ENCODE measurements at regions of chr11 and their contacts with region 1.

Region 1: GRCh38 chr11:60985991-60986915 is 14.8 kb downstream of the CD6 start:
- DNase-seq: peak; percentile 90
- H3K4me3 Mint-ChIP-seq: peak overlapping the region; percentile 80
- H3K27ac Mint-ChIP-seq: peak overlapping the region; percentile 99
- H3K4me1 Mint-ChIP-seq: peaks cover 91% of the 10 kb centered on the region
- H3K27me3 Mint-ChIP-seq: no peaks in the 10 kb centered on the region

Region 2: DNA sequence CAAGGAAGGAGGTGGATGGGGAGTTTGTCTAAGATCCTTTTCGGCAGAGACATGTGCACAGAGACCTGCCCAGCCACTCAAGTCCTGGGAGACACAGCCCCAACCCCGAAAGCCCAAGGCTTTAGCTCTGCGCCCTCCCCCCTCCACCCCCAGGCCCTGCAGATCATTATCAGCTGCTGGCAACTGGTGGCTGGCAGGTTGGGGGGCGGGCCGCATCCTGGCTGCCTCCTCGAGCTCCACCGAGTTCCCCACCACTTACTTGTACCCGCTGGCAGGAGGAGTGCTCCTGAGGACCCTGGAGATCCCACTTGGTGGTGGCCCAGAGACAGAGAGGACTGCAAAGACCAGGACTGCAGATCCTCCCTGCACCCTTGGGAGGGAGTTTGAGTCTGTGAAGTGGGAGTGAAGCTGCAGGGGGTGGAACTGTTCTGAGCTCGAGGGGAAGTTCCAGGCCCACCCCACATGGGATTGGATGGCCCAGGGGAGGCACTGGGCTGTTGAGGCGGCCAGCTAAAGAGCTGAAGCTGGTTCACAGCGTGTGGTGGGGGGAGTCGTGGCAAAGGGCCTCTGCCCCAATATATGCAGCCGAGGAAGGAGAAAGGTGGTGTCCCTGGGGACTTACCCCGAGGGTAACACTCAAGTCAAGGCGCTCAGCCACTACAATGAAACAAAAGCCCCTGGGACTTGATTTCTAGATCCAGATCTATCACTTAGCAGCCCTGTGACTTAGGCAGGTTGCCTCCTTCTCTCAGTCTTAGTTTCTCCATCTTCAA is 164.2 kb before region 1 on chr11:
- CTCF ChIA-PET with region 1: no interaction called
- POLR2A ChIA-PET with region 1: no interaction called
- DNase-seq: no peak
- H3K4me3 Mint-ChIP-seq: no peak overlapping the region
- H3K27ac Mint-ChIP-seq: no peak overlapping the region
- H3K4me1 Mint-ChIP-seq: no peaks in the 10 kb centered on the region
- H3K27me3 Mint-ChIP-seq: peaks cover 6% of the 10 kb centered on the region

Region 3: GRCh38 chr11:60951899-60952741 is 34.1 kb before region 1 on chr11 and contains the start of gene SLC15A3:
- CTCF ChIA-PET with region 1: no interaction called
- POLR2A ChIA-PET with region 1: no interaction called
- DNase-seq: peak; percentile 29
- H3K4me3 Mint-ChIP-seq: peak within 1 kb of the TSS; percentile 44
- H3K27ac Mint-ChIP-seq: peak within 1 kb of the TSS; percentile 2
- H3K4me1 Mint-ChIP-seq: peaks cover 17% of the 10 kb centered on the region
- H3K27me3 Mint-ChIP-seq: peaks cover 40% of the 10 kb centered on the region
- total RNA-seq, gene SLC15A3: 0.28 to 1.0 TPM

Region 4: DNA sequence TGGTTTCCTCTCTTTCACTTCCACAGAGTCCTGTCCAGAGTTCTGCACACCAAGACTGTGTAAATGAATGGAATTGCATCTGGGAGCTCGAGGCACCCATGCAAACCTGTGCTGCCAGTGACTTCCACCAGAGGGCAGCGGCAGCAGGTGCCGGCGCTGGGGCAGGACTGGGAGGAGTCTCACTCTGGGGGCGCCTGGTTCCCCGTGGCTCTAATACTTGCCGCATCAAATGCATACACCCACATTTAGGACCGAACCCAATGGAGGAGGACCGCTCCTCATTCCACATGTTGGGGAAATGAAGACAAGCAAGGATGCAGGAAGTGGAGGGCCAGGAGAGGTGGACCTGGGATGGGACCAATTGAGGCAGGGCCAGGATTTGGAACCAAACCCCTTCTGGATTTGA is 15.9 kb before region 1 on chr11:
- CTCF ChIA-PET with region 1: interaction called, 27 read pairs
- POLR2A ChIA-PET with region 1: no interaction called
- DNase-seq: peak; percentile 85
- H3K4me3 Mint-ChIP-seq: peak overlapping the region; percentile 88
- H3K27ac Mint-ChIP-seq: peak overlapping the region; percentile 50
- H3K4me1 Mint-ChIP-seq: peaks cover 26% of the 10 kb centered on the region
- H3K27me3 Mint-ChIP-seq: peaks cover 12% of the 10 kb centered on the region

Region 5: GRCh38 chr11:61004180-61004611 is 17.9 kb after region 1 on chr11:
- CTCF ChIA-PET with region 1: interaction called, 3 read pairs
- POLR2A ChIA-PET with region 1: interaction called, 53 read pairs
- DNase-seq: peak; percentile 43
- H3K4me3 Mint-ChIP-seq: peak overlapping the region; percentile 53
- H3K27ac Mint-ChIP-seq: peak overlapping the region; percentile 83
- H3K4me1 Mint-ChIP-seq: peaks cover 77% of the 10 kb centered on the region
- H3K27me3 Mint-ChIP-seq: no peaks in the 10 kb centered on the region

Region 6: GRCh38 chr11:61021661-61022212 is 35.5 kb after region 1 on chr11:
- CTCF ChIA-PET with region 1: interaction called, 3 read pairs
- POLR2A ChIA-PET with region 1: interaction called, 10 read pairs
- DNase-seq: peak; percentile 83
- H3K4me3 Mint-ChIP-seq: peak overlapping the region; percentile 59
- H3K27ac Mint-ChIP-seq: peak overlapping the region; percentile 91
- H3K4me1 Mint-ChIP-seq: peaks cover 74% of the 10 kb centered on the region
- H3K27me3 Mint-ChIP-seq: no peaks in the 10 kb centered on the region

Region 7: GRCh38 chr11:61054927-61055562 is 68.8 kb after region 1 on chr11:
- CTCF ChIA-PET with region 1: interaction called, 3 read pairs
- POLR2A ChIA-PET with region 1: interaction called, 12 read pairs
- DNase-seq: peak; percentile 46
- H3K4me3 Mint-ChIP-seq: peak overlapping the region; percentile 6
- H3K27ac Mint-ChIP-seq: peak overlapping the region; percentile 85
- H3K4me1 Mint-ChIP-seq: peaks cover 84% of the 10 kb centered on the region
- H3K27me3 Mint-ChIP-seq: no peaks in the 10 kb centered on the region

Region 8: DNA sequence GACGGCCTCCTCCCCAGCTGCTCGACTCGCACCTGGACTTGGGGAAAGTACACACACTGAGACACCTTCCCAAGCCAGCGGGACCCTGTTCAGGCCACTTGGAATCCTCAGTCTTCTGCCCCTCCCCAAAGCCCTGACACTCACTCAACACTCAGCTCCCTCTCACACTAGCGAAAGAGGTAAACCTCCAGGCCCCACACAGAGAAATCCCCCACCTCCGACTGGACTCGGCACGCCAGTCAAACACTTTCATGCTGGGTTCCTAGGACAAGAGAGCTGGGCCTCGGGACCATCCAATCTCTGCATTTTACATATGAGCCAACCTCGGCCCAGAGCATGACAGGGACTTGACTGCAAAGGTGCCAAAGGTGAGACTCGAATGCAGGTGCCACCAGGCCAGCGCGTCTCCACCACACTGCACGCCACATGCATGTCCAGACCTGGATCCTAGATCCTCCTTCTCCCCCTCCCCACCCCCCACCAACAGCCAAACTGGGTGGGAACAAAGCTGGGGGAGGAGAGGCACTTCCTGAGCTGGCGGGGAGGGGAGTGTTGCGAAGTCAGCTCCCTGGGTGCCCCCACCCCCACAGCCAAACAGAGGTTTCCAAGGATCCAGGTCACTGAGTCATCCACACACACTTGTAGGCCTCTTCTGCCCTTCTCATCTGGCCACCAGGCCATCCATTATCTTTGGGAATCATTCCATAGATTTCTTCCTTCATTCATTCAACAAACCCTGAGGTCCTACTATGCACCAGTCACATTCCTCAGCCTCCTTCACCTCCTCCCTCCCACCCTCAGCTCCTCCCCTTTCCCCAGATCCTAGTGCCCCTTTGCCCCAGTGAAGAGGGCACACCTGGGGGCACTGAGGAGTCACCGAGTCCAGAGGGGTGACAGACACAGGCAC is 105.4 kb after region 1 on chr11:
- CTCF ChIA-PET with region 1: interaction called, 3 read pairs
- POLR2A ChIA-PET with region 1: interaction called, 16 read pairs
- DNase-seq: peak; percentile 54
- H3K4me3 Mint-ChIP-seq: peak overlapping the region; percentile 77
- H3K27ac Mint-ChIP-seq: peak overlapping the region; percentile 96
- H3K4me1 Mint-ChIP-seq: peaks cover 69% of the 10 kb centered on the region
- H3K27me3 Mint-ChIP-seq: no peaks in the 10 kb centered on the region

Measured in activated CD4-positive, alpha-beta memory T cell treated with anti-CD3 and anti-CD28 coated beads, Interleukin-2, amount 10 ng/mL, durations not matched to agents 7 days and 5 days (primary cell).